ENCODE measurements at regions of chr3 and their contacts with region 1.

Region 1: GRCh38 chr3:42247576-42248027 is 18.4 kb downstream of the CCK start:
- DNase-seq: no peak
- H3K4me3 ChIP-seq: no peak overlapping the region
- CTCF ChIP-seq: peak; percentile 66

Region 2: GRCh38 chr3:41960826-41961749 is 286.5 kb before region 1 on chr3:
- CTCF ChIA-PET with region 1: no interaction called
- POLR2A ChIA-PET with region 1: no interaction called
- DNase-seq: no peak
- H3K4me3 ChIP-seq: peak overlapping the region; percentile 79
- CTCF ChIP-seq: no peak

Region 3: GRCh38 chr3:42263354-42264346 is 16.0 kb after region 1 on chr3:
- CTCF ChIA-PET with region 1: interaction called, 35 read pairs
- POLR2A ChIA-PET with region 1: no interaction called
- DNase-seq: no peak
- H3K4me3 ChIP-seq: peak overlapping the region; percentile 6; the same call in 1 of the 2 replicates
- CTCF ChIP-seq: no peak

Measured in AG04449 (cell line).